Activated CD4-positive, alpha-beta T cell treated with anti-CD3 and anti-CD28 coated beads for 36 hours (primary cell): ENCODE measurements at regions of chr16 and their contacts with region 1.

Region 1: GRCh38 chr16:56608043-56608875 is at the start of gene MT2A:
- DNase-seq: peak; percentile 97
- ATAC-seq: peak; percentile 66
- H3K4me3 Mint-ChIP-seq: peak within 1 kb of the TSS; percentile 97
- H3K27ac Mint-ChIP-seq: peak within 1 kb of the TSS; percentile 98
- H3K4me1 Mint-ChIP-seq: peaks cover 56% of the 10 kb centered on the region
- H3K27me3 Mint-ChIP-seq: no peaks in the 10 kb centered on the region
- total RNA-seq, gene MT2A: 114 to 380 TPM

Region 2: GRCh38 chr16:56450986-56451752 is 157.1 kb before region 1 on chr16 and contains the starts of genes NUDT21 and OGFOD1:
- CTCF ChIA-PET with region 1: no interaction called
- POLR2A ChIA-PET with region 1: interaction called, 4 read pairs
- intact Hi-C with region 1: loop called in 1 of 2 experiments (anchors 2 kb)
- DNase-seq: peak; percentile 95
- ATAC-seq: peak; percentile 97
- H3K4me3 Mint-ChIP-seq: peak within 1 kb of the TSS; percentile 84
- H3K27ac Mint-ChIP-seq: peak within 1 kb of the TSS; percentile 93
- H3K4me1 Mint-ChIP-seq: peaks cover 51% of the 10 kb centered on the region
- H3K27me3 Mint-ChIP-seq: no peaks in the 10 kb centered on the region
- total RNA-seq, gene NUDT21: 333 to 349 TPM
- total RNA-seq, gene OGFOD1: 56.2 to 64.1 TPM

Region 3: GRCh38 chr16:56643080-56643778 is 35.0 kb after region 1 on chr16:
- CTCF ChIA-PET with region 1: interaction called, 4 read pairs
- POLR2A ChIA-PET with region 1: interaction called, 3 read pairs
- intact Hi-C with region 1: loop called (anchors 1 to 2 kb)
- DNase-seq: peak; percentile 90
- ATAC-seq: peak; percentile 100
- H3K4me3 Mint-ChIP-seq: peak overlapping the region; percentile 39
- H3K27ac Mint-ChIP-seq: peak overlapping the region; percentile 39
- H3K4me1 Mint-ChIP-seq: peaks cover 20% of the 10 kb centered on the region
- H3K27me3 Mint-ChIP-seq: peaks cover 43% of the 10 kb centered on the region

Region 4: DNA sequence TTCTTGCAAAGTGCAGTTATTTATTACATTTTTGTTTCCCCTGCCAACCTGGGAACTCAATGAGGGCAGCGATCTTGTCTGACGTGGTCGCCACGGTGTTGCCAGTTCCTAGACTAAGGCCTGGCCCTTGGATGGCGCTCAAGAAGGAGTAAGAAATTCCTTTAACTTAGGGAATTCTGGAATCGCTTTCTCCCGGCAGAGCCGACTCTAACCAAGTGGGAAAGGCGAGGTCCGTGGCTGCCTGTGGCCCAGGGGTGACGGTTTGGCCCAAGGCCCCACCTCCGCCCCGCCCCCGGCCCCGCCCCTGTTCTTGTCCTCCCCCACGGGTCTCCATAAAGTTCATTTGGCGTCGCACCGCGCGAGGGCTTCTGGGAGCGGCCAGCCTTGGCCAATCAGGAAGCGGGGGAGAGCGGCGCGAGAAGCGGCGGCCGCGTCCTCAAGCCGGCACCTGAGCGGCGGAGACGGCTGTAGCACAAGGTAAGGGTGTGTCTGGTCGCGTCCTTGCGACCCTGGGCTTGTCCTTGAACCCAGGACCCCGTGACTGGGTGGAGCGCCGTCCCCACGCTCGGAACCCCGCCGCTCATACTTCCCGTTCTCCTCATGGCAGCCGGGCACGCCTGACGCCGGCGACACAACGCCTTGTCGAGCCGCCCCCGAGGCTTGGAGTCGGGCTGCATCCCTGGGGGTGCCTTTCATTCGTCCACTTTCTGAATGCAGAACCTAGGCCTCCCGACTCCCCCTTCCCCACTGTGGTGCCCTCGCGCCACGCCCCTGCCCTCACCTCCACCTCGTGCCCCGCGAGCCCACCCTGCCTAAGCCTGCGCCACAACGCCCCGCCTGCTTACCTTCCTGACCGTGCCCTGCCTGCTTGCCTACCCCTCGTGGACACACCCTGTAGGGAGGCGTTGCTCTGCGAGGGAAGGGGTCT is 121.7 kb after region 1 on chr16 and contains the start of gene NUP93:
- CTCF ChIA-PET with region 1: no interaction called
- POLR2A ChIA-PET with region 1: no interaction called
- intact Hi-C with region 1: loop called in 1 of 2 experiments (anchors 1 kb)
- DNase-seq: peak; percentile 95
- ATAC-seq: peak; percentile 83
- H3K4me3 Mint-ChIP-seq: no peak within 1 kb of the TSS
- H3K27ac Mint-ChIP-seq: peak within 1 kb of the TSS; percentile 85
- H3K4me1 Mint-ChIP-seq: peaks cover 14% of the 10 kb centered on the region
- H3K27me3 Mint-ChIP-seq: no peaks in the 10 kb centered on the region
- total RNA-seq, gene NUP93: 131 to 154 TPM

Region 5: GRCh38 chr16:56988948-56989945 is 381.0 kb after region 1 on chr16 and contains the start of gene NLRC5:
- CTCF ChIA-PET with region 1: no interaction called
- POLR2A ChIA-PET with region 1: no interaction called
- intact Hi-C with region 1: loop called in 1 of 2 experiments (anchors 5 kb)
- DNase-seq: peak; percentile 97
- ATAC-seq: peak; percentile 78
- H3K4me3 Mint-ChIP-seq: peak within 1 kb of the TSS; percentile 98
- H3K27ac Mint-ChIP-seq: peak within 1 kb of the TSS; percentile 99
- H3K4me1 Mint-ChIP-seq: peaks cover 69% of the 10 kb centered on the region
- H3K27me3 Mint-ChIP-seq: no peaks in the 10 kb centered on the region
- total RNA-seq, gene NLRC5: 143 to 175 TPM

Region 6: DNA sequence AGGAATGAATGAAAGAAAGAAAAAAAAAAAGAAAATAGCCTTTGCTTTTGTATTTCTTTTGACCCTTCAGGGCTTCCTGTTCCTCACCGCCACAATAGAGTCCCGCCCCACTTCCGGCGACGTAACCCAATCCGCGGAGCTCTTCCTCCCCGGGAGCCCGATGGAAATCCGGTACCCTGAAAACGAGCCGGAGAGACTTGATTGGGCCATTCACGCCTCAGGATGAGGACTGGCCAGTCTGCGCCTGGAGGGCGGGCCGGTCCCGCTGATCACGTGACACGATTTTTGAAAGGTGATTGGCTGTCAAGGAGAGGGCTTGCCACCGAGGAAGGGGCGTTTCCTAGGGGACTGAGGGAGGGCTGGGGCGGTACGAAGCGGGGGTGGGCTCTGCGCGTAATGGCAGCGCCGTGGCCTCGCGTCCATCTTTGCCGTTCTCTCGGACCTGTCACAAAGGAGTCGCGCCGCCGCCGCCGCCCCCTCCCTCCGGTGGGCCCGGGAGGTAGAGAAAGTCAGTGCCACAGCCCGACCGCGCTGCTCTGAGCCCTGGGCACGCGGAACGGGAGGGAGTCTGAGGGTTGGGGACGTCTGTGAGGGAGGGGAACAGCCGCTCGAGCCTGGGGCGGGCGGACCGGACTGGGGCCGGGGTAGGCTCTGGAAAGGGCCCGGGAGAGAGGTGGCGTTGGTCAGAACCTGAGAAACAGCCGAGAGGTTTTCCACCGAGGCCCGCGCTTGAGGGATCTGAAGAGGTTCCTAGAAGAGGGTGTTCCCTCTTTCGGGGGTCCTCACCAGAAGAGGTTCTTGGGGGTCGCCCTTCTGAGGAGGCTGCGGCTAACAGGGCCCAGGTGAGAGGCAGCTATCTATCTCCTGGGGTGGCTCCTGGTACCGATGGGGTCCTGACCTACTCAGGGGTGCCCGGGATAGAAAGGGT is 577.9 kb after region 1 on chr16 and contains the starts of genes PSME3IP1 and RSPRY1:
- CTCF ChIA-PET with region 1: no interaction called
- POLR2A ChIA-PET with region 1: no interaction called
- intact Hi-C with region 1: loop called in 1 of 2 experiments (anchors 10 kb)
- DNase-seq: peak; percentile 99
- ATAC-seq: peak; percentile 96
- H3K4me3 Mint-ChIP-seq: peak within 1 kb of the TSS; percentile 100
- H3K27ac Mint-ChIP-seq: peak within 1 kb of the TSS; percentile 97
- H3K4me1 Mint-ChIP-seq: peaks cover 37% of the 10 kb centered on the region
- H3K27me3 Mint-ChIP-seq: no peaks in the 10 kb centered on the region
- total RNA-seq, gene PSME3IP1: 111 to 156 TPM
- total RNA-seq, gene RSPRY1: 24.6 to 30.2 TPM